Body of pancreas (tissue), 4 donors: ENCODE measurements at regions of chr6 and their contacts with region 1.

Region 1: DNA sequence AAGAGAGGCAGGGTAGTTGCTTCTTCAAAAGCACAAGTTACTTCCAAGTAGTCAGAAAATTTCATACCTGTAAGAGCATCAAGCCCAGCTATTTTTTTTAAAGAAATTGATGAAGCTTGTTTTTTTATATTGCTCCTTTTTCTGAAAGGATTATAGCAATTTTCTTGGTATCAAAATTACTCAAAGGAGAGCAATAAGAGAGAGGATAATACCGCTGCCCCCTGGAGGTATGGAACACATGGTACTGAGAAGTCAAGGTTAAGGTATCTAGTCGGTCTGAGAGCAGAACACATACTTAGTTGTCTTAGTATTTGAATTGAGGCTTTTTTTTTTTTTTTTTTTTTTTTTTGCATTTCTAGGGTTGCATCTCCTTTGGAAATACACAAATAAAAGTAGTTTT is 59.4 kb downstream of the ADGRF5 start:
- DNase-seq: no peak
- ATAC-seq: no peak
- H3K4me3 ChIP-seq: no peak overlapping the region
- H3K27ac ChIP-seq: no peak overlapping the region
- H3K4me1 ChIP-seq: no peaks in the 10 kb centered on the region
- H3K27me3 ChIP-seq: no peaks in the 10 kb centered on the region
- CTCF ChIP-seq: no peak
- POLR2A ChIP-seq: no peak

Region 2: DNA sequence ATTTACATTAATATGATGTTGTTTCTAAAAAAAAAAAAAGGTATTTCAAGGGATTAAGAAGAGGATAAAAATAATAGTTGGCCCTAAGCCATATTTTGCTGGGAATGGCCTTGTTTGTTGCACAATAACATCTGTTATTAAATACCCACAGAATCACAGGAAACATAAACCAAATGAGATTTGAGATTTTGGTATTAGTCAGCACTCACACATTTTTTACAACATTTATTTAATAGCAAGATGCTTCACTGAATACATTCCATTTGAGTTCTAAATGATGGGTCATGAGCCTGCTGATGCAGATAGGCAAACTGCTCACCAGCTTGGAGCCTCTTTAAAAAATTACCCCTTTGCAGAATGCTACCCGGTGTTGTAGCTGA is 598.7 kb before region 1 on chr6:
- intact Hi-C with region 1: no loop called
- DNase-seq: no peak
- ATAC-seq: peak; percentile 33
- H3K4me3 ChIP-seq: no peak overlapping the region
- H3K27ac ChIP-seq: no peak overlapping the region
- H3K4me1 ChIP-seq: peaks cover 4% of the 10 kb centered on the region
- H3K27me3 ChIP-seq: no peaks in the 10 kb centered on the region
- CTCF ChIP-seq: no peak
- POLR2A ChIP-seq: no peak

Region 3: DNA sequence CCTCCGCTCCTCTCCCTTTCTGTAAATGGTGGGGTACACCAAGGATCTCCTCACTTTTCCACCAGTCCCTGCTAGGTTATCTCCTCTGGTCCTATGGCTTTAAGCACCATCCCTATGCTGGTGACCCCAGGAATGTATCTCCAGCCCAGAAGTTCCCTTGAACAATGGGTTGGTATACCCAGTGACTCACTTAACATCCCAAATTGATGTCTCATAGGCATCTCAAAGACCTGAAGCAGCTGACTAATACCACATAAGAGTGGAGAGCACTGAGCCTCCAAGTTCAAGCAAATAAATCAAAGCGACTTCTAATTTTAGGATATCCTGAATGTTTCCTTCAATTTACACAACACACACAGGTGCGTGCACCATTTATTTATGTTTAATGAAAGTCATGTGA is 131.5 kb after region 1 on chr6:
- intact Hi-C with region 1: loop called (anchors 10 kb)
- DNase-seq: no peak
- ATAC-seq: no peak
- H3K4me3 ChIP-seq: no peak overlapping the region
- H3K27ac ChIP-seq: no peak overlapping the region
- H3K4me1 ChIP-seq: peaks cover 22% of the 10 kb centered on the region
- H3K27me3 ChIP-seq: no peaks in the 10 kb centered on the region
- CTCF ChIP-seq: no peak
- POLR2A ChIP-seq: no peak

Region 4: DNA sequence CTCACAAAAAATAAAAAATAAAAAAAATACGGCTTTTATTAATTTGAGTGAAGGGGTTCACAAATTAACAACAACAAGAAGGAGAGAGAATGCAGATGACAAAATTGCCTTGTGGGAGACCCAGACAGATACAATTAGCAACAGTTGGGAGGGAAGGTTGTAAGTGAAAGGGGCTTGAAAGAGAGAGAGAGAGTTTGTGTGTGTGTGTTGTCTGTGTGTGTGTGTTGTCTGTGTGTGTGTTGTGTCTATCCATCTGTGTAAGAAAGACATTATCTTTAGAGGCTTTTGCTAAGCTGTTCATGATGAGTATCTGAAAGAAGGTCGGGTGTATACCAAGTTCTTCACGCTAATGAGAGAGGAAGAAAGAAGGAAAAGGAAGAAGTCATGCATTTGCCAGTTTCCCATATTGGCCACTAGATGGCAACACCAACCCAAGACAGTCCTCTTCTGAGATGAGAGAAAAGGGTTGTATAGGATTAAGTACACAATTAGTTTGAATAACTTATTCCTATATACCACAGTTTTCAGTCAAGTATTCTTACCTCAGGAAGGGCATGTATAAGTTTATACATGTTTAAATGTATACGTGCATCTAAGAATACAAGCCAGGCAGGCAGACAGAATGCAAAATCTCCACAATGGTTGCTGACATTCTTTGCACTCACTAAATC is 551.5 kb after region 1 on chr6:
- intact Hi-C with region 1: no loop called
- DNase-seq: peak; percentile 43 to 60 (median 52)
- ATAC-seq: peak; percentile 85
- H3K4me3 ChIP-seq: peak overlapping the region in 1 of 2 donors; percentile 8
- H3K27ac ChIP-seq: peak overlapping the region in 3 of 4 donors; percentile 51 to 75 (median 75)
- H3K4me1 ChIP-seq: peaks cover 13% of the 10 kb centered on the region
- H3K27me3 ChIP-seq: no peaks in the 10 kb centered on the region
- CTCF ChIP-seq: peak; percentile 73 to 93 (median 90)
- POLR2A ChIP-seq: no peak

Region 5: DNA sequence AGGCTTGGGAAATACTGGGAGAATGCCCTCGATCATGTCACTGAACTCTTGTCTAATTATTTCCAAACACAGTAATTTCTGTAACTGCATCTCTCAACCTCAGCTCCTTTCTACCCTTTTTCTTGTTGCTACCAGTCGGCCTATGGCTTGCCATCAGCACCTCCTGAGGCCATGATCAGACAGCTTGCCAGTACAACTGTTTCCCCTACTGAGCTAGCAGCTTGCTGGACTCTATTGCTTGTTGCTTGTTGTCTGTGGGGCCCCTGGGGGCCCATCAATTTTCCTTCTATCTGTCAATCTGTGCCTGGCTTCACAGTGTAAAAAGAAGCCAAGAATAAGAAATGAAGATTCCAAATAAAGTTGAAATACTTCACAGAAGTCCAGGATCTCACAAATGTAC is 1043.3 kb after region 1 on chr6:
- intact Hi-C with region 1: no loop called
- DNase-seq: no peak
- ATAC-seq: no peak
- H3K4me3 ChIP-seq: no peak overlapping the region
- H3K27ac ChIP-seq: no peak overlapping the region
- H3K4me1 ChIP-seq: no peaks in the 10 kb centered on the region
- H3K27me3 ChIP-seq: no peaks in the 10 kb centered on the region
- CTCF ChIP-seq: no peak
- POLR2A ChIP-seq: no peak